ENCODE measurements at regions of chr9 and their contacts with region 1.

Region 1: GRCh38 chr9:214648-215493 is at the start of gene DOCK8:
- DNase-seq: peak; percentile 82
- ATAC-seq: peak; percentile 88
- H3K4me3 Mint-ChIP-seq: peak within 1 kb of the TSS; percentile 91
- H3K27ac Mint-ChIP-seq: peak within 1 kb of the TSS; percentile 90
- H3K4me1 Mint-ChIP-seq: peaks cover 41% of the 10 kb centered on the region
- H3K27me3 Mint-ChIP-seq: no peaks in the 10 kb centered on the region
- CTCF ChIP-seq: no peak
- total RNA-seq, gene DOCK8: 207 and 219 TPM in 2 replicates

Region 2: DNA sequence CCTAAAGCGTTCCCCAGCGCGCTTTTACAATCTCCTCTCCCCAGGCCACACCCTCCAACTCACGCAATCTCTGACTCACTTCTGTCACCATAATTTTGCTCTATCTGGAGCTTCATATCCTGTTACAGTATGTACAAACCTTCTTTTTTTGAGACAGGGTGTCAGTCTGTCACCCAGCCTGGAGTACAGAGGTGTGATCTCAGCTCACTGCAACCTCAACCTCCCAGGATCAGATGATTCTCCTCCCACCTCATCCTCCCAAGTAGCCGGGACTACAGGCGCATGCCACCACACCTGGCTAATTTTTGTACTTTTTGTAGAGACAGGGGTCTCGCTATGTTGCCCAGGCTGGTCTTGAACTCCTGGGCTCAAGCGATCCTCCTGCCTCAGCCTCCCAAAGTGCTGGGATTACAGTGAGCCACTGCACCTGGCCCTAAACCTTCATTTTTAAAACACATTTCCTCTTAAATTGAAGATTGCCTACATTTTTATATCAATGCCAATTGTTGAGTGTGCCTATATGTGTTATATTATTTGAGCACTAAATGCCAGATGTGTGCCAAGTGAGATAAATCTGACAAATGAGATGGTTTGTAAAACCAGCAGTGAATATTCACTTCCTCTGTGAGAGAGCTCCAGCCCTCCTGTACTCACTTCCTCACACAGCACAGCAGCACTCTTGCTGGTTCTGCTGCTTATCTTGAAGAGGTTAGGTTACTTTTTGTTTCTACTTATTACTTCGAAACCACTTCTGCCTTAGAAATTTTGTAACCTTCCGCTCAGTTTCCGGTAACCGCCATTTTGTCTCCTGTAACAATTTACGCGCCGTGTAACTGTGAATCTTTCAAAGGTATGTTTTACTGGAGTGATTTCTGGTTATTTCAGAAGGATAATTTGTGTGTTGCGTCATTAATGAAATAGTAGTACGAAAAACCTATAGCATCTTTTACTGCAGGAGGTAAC is 57.7 kb after region 1 on chr9:
- CTCF ChIA-PET with region 1: interaction called, 14 read pairs
- POLR2A ChIA-PET with region 1: interaction called, 81 read pairs
- intact Hi-C with region 1: loop called (anchors 1 kb)
- DNase-seq: peak; percentile 27
- ATAC-seq: peak; percentile 97
- H3K4me3 Mint-ChIP-seq: peak overlapping the region; percentile 90
- H3K27ac Mint-ChIP-seq: peak overlapping the region; percentile 95
- H3K4me1 Mint-ChIP-seq: peaks cover 52% of the 10 kb centered on the region
- H3K27me3 Mint-ChIP-seq: no peaks in the 10 kb centered on the region
- CTCF ChIP-seq: no peak

Region 3: DNA sequence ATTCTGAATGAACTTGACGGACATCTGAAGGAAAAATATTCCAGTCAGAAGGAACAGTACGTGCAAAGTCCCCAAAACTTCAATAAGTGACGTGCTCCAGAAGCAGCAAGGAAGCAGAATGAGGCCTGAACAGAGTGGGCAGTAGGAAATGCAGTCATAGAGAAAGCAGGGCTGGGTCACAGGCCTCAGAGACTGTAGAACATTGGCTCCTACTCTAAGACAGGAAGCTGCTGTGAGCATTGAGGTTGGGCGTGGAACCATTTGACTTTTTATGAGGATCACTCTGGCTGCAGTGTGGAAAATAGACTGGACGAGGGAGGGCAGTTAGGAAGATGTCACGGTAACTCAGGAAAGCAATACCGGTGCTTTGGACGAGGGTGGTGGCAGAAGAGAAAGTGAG is 63.8 kb after region 1 on chr9:
- CTCF ChIA-PET with region 1: interaction called, 14 read pairs
- POLR2A ChIA-PET with region 1: interaction called, 81 read pairs
- intact Hi-C with region 1: no loop called
- DNase-seq: no peak
- ATAC-seq: peak; percentile 51
- H3K4me3 Mint-ChIP-seq: no peak overlapping the region
- H3K27ac Mint-ChIP-seq: no peak overlapping the region
- H3K4me1 Mint-ChIP-seq: peaks cover 52% of the 10 kb centered on the region
- H3K27me3 Mint-ChIP-seq: no peaks in the 10 kb centered on the region
- CTCF ChIP-seq: no peak

Region 4: DNA sequence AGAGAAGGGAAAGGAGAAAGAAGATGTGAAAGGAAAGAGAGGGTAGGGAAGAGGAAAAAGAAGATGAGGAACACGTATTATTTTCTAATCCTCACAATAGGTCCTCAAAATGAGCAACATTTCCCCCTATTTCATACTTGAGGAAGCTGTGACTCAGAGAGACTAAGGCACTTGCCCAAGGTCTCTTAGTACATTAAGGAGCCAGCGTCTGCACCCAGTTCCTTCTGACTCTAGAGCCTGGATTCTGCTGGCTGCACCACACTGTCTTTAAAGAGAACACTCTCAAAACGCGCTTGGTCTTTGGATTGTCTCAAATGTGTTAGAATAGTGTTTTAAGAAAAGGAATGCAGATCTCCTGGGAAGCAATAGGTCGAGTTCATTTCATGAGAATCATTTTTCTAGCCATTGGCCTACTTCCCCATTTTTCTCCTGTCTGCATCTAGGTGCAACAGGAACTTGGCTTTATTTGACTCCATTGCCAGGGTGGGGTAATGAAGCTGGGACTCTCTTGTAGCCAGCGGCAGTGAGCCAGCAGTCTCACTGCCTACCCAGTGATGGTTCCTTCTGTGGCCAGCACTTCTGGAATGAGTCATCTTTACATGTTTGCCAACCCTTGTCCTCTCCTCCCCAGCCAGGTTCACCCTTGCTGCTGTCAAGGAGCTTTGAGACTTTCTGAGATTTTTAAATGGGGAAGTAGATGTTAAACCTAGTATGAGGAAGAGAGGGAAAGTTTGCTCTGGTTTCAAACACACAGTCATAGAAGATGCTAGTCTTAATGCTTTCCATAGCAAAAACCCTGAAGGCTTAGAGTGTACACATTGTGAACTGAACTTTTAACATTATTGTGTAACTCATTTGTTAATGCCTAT is 82.5 kb after region 1 on chr9:
- CTCF ChIA-PET with region 1: interaction called, 19 read pairs
- POLR2A ChIA-PET with region 1: interaction called, 45 read pairs
- intact Hi-C with region 1: loop called (anchors 1 kb)
- DNase-seq: peak; percentile 42
- ATAC-seq: peak; percentile 96
- H3K4me3 Mint-ChIP-seq: peak overlapping the region; percentile 76
- H3K27ac Mint-ChIP-seq: peak overlapping the region; percentile 89
- H3K4me1 Mint-ChIP-seq: peaks cover 40% of the 10 kb centered on the region
- H3K27me3 Mint-ChIP-seq: no peaks in the 10 kb centered on the region
- CTCF ChIP-seq: no peak

Region 5: GRCh38 chr9:306887-307286 is 92.0 kb after region 1 on chr9:
- CTCF ChIA-PET with region 1: interaction called, 8 read pairs
- POLR2A ChIA-PET with region 1: no interaction called
- intact Hi-C with region 1: loop called (anchors 2 kb)
- DNase-seq: no peak
- ATAC-seq: peak; percentile 74
- H3K4me3 Mint-ChIP-seq: no peak overlapping the region
- H3K27ac Mint-ChIP-seq: peak overlapping the region; percentile 46
- H3K4me1 Mint-ChIP-seq: no peaks in the 10 kb centered on the region
- H3K27me3 Mint-ChIP-seq: no peaks in the 10 kb centered on the region
- CTCF ChIP-seq: no peak

Region 6: DNA sequence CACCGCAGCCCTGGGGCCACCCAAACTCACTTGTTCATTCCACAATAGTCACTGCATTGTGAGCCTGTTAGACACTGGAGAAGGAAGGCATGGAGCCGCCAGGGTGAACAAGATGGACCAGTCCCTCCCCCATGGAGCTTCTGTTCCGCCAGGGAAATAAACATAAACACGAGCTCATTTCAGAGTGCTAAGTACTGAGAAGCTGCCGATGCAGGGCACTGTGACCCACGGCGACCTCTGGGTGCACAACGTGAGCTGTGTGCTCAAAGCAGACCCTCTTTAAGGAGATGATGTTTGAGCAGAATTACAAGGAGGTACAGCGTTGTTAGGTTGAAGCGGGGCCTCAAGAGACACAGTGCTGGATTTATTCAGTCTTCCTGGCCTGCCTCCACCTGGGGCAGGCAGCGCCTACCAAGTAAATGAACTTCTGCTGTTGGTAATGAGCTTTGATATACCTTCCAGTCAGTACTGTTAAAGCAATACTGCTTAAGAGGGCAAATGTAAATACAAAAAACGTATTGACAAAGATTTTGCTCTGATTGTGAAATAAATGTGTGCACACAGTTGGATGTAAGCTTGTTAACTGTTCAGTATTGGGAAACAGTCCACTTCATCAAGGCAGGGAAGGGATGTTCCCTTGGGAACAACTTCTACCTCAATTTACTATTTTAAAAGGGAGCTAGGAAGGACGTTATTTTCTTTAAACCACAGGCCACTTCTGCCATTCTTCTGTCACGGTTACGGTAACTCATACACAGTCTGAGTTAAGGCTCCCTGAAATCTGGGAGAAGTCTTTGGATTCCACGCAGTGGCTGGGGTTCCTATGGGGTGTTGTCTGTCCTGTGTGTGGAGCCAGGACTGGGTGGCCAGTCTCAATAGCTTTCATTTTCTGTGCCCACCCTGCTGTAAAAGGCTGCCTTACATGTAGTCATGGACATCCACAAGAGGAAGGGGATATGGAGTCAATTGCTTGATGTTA is 577.7 kb after region 1 on chr9:
- CTCF ChIA-PET with region 1: no interaction called
- POLR2A ChIA-PET with region 1: no interaction called
- intact Hi-C with region 1: no loop called
- DNase-seq: no peak
- ATAC-seq: no peak
- H3K4me3 Mint-ChIP-seq: no peak overlapping the region
- H3K27ac Mint-ChIP-seq: no peak overlapping the region
- H3K4me1 Mint-ChIP-seq: no peaks in the 10 kb centered on the region
- H3K27me3 Mint-ChIP-seq: peaks cover 10% of the 10 kb centered on the region
- CTCF ChIP-seq: no peak